Heart left ventricle (tissue), 16 donors: ENCODE measurements at regions of chr6 and their contacts with region 1.

Region 1: DNA sequence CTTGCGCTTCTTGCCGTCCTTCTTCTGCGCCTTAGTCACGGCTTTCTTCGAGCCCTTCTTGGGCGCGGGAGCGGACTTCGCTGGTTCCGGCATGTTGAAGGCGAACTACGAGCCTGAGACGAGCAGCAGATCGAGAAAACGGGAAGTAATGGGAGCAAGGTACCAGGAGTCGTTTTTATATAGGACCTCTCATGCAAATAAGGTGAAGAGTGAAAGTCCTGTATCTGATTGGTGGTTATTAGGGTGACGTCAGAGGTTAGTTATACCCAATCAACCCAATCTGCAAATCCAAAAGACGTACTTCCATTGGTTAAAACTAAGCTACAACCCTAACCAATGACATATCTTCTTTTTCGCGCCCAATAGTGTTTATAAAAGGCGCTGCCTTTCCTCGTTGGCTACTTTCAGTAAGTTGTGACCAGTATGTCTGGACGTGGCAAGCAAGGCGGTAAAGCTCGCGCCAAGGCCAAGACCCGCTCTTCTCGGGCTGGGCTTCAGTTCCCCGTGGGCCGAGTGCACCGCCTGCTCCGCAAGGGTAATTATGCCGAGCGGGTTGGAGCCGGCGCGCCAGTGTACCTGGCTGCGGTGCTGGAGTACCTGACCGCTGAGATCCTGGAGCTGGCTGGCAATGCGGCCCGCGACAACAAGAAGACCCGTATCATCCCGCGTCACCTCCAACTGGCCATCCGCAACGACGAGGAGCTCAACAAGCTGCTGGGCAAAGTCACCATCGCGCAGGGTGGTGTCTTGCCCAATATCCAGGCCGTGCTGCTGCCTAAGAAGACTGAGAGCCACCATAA is 100.6 kb upstream of the PRSS16 start:
- DNase-seq: peak; percentile 73 to 84 (median 79)
- ATAC-seq: peak; percentile 95 to 98 (median 96)
- H3K4me3 ChIP-seq: peak overlapping the region; percentile 30 to 79 (median 65)
- H3K27ac ChIP-seq: peak overlapping the region; percentile 77 to 98 (median 90)
- H3K4me1 ChIP-seq: peaks cover 0 to 37% (median 11%) of the 10 kb centered on the region in 12 donors
- H3K27me3 ChIP-seq: no peaks in the 10 kb centered on the region
- CTCF ChIP-seq: no peak
- POLR2A ChIP-seq: peak; percentile 15 to 96

Region 2: GRCh38 chr6:26017632-26017966 is 1129.3 kb before region 1 on chr6:
- intact Hi-C with region 1: loop called in 2 of 10 experiments (anchors 5 to 10 kb)
- DNase-seq: peak; percentile 70 to 82 (median 76)
- ATAC-seq: peak in 3 of 4 donors; percentile 10 to 44 (median 40)
- H3K4me3 ChIP-seq: peak overlapping the region; percentile 15 to 60 (median 52)
- H3K27ac ChIP-seq: peak overlapping the region; percentile 70 to 87 (median 80)
- H3K4me1 ChIP-seq: peaks cover 0 to 33% (median 9%) of the 10 kb centered on the region in 12 donors
- H3K27me3 ChIP-seq: no peaks in the 10 kb centered on the region
- CTCF ChIP-seq: peak in 9 of 12 donors; percentile 11 to 66 (median 44)
- POLR2A ChIP-seq: peak in 1 of 2 donors; percentile 69

Region 3: DNA sequence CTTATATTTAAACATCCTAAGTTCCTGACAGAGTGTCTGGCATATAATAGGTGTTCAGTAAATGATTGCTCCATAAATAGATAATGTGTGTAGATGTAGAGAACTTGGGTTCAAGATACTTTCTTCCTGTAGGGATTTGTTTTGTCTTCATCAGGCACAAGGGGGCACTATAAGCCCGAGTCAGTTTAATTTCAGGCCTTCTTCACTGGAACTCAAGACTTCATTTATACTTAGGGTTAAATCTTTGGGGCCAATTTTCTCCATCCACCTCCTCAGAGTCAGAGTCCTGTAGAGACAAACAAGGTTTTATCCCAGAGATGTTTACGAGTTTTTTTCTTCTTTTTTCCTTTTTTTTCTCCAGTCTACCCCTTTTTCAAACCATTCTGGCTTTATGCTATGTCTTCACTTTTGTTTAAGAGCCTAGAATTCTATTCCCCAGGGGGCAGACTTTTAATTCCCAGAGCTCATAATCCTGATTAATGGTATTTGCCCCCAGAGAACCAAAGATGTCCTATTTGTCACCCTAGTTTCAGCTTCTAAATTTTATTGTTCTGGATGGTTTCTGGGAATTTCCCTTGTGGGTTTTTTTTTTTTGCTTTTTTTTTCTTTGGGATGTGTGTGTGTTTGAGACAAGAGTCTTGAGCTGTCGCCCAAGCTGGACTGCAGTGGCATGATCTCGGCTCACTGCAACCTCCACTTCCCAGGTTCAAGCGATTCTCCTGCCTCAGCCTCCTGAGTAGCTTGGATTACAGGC is 971.3 kb before region 1 on chr6:
- intact Hi-C with region 1: loop called in 1 of 10 experiments (anchors 10 kb)
- DNase-seq: no peak
- ATAC-seq: no peak
- H3K4me3 ChIP-seq: no peak overlapping the region
- H3K27ac ChIP-seq: peak overlapping the region in 2 of 12 donors; percentile 1 to 40
- H3K4me1 ChIP-seq: peaks cover 0 to 20% (median 9%) of the 10 kb centered on the region in 12 donors
- H3K27me3 ChIP-seq: no peaks in the 10 kb centered on the region
- CTCF ChIP-seq: peak; percentile 45 to 76 (median 62)
- POLR2A ChIP-seq: no peak

Region 4: GRCh38 chr6:27205375-27206278 is 58.7 kb after region 1 on chr6:
- intact Hi-C with region 1: no loop called
- DNase-seq: no peak
- ATAC-seq: no peak
- H3K4me3 ChIP-seq: no peak overlapping the region
- H3K27ac ChIP-seq: no peak overlapping the region
- H3K4me1 ChIP-seq: peaks cover 0 to 6% (median 0%) of the 10 kb centered on the region in 12 donors
- H3K27me3 ChIP-seq: peaks cover 19 to 74% (median 53%) of the 10 kb centered on the region in 9 donors
- CTCF ChIP-seq: no peak
- POLR2A ChIP-seq: no peak